ENCODE measurements at regions of chr6 and their contacts with region 1.

Region 1: DNA sequence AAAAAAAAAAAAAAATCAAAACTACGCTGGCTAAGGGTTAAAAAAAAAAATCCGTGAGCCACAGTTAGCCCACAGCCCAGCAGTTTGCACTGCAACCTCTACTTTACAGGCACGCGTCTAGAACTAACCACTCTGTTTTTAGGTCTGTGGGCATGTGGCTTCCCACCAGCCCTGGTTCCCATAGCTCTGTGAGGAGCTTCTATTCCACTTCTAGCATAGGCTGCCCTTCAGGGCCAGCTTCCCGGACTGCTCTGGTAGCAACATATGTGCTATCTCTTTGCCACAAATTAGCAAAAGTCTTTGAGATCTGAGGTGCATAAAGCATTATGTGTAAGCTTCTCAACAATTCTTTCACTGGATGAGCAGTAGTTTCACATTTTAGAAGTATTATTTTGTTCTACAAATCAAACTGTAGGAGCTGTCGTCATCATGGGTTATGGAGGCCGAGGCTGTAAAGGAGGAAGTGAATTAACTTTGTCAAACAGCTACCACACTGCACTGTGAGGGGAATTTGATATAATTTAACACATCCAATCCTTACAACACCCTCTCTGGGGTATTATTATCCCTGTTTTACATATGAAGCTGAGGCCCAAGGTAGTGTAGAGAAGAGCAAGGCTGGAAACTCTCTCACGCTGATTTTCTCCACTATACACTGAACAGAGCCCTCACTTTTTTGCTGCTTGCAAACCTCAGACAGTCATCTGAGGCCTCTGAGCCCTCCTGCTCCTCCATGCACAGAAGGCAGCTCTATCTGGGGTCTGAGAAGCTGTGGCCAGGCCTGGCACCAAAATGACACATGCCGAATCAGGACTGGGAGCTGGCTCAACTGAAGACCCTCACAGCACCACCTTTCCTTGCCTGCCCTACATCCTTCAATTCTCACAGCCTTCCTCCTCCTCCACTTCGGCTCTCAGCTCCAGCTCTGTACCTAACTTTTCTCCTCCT is 35.4 kb downstream of the MAN1A1 start:
- DNase-seq: no peak
- H3K4me3 ChIP-seq: no peak overlapping the region
- CTCF ChIP-seq: no peak

Region 2: GRCh38 chr6:119129148-119129967 is 184.9 kb before region 1 on chr6:
- in situ Hi-C with region 1: loop called (anchors 25 kb)
- DNase-seq: peak; percentile 83
- H3K4me3 ChIP-seq: no peak overlapping the region
- CTCF ChIP-seq: peak; percentile 81

Region 3: GRCh38 chr6:119821380-119821779 is 507.2 kb after region 1 on chr6:
- in situ Hi-C with region 1: no loop called
- DNase-seq: no peak
- H3K4me3 ChIP-seq: no peak overlapping the region
- CTCF ChIP-seq: no peak